Calu3 (cell line): ENCODE measurements at regions of chr10 and their contacts with region 1.

Region 1: DNA sequence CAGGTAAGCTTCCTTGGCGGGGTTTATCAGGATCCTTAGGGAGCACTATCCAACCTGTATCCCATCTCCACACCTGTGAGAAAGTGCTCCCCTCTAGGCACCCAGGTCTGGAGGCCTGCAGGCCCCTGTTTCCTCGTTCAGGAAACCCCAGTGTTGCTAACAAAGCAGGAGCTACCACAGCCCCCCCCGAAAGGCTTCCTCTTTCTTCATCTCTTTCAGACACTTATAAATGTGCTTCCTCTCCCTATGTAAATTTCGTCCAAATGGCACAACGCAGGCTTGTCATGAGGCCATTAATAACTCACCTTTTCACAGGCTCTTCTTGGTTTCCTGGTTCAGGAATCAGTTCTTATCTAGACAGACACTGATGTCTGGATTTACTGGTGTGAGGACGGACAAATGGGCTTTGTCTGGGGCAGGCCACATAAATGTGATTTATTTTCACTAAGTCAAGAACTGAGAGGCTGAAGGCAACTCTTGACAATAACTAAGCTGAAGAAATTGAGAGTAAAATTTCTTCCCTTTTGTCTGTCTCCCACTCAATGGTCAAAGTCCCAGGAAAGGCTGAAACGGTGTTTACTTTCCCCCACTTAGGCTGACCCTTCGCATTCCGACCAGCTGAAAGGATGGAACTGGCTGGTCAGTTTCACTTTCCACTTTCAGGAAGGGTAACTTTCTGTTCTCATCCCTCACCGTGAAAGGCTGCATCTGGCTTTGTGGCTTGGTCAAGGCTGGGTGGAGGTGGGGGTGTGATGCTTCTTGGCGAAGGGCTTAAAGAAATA is 46.8 kb downstream of the PIK3AP1 start:
- DNase-seq: peak; percentile 69
- H3K4me3 Mint-ChIP-seq: peak overlapping the region; percentile 74
- H3K27ac Mint-ChIP-seq: peak overlapping the region; percentile 98
- H3K4me1 Mint-ChIP-seq: peaks cover 44% of the 10 kb centered on the region
- H3K27me3 Mint-ChIP-seq: no peaks in the 10 kb centered on the region
- CTCF ChIP-seq: no peak

Region 2: GRCh38 chr10:96586419-96587263 is 86.9 kb before region 1 on chr10 and contains the start of gene TM9SF3:
- CTCF ChIA-PET with region 1: no interaction called
- intact Hi-C with region 1: loop called (anchors 5 kb)
- DNase-seq: peak; percentile 88
- H3K4me3 Mint-ChIP-seq: no peak within 1 kb of the TSS
- H3K27ac Mint-ChIP-seq: peak within 1 kb of the TSS; percentile 93
- H3K4me1 Mint-ChIP-seq: peaks cover 8% of the 10 kb centered on the region
- H3K27me3 Mint-ChIP-seq: no peaks in the 10 kb centered on the region
- CTCF ChIP-seq: no peak
- total RNA-seq, gene TM9SF3: 177 and 183 TPM in 2 replicates

Region 3: GRCh38 chr10:96626795-96627194 is 46.7 kb before region 1 on chr10:
- CTCF ChIA-PET with region 1: no interaction called
- intact Hi-C with region 1: no loop called
- DNase-seq: no peak
- H3K4me3 Mint-ChIP-seq: no peak overlapping the region
- H3K27ac Mint-ChIP-seq: no peak overlapping the region
- H3K4me1 Mint-ChIP-seq: no peaks in the 10 kb centered on the region
- H3K27me3 Mint-ChIP-seq: no peaks in the 10 kb centered on the region
- CTCF ChIP-seq: no peak

Region 4: GRCh38 chr10:96690755-96691731 is 17.5 kb after region 1 on chr10:
- CTCF ChIA-PET with region 1: interaction called, 3 read pairs
- intact Hi-C with region 1: loop called (anchors 1 kb)
- DNase-seq: no peak
- H3K4me3 Mint-ChIP-seq: no peak overlapping the region
- H3K27ac Mint-ChIP-seq: no peak overlapping the region
- H3K4me1 Mint-ChIP-seq: peaks cover 24% of the 10 kb centered on the region
- H3K27me3 Mint-ChIP-seq: no peaks in the 10 kb centered on the region
- CTCF ChIP-seq: no peak

Region 5: GRCh38 chr10:96719850-96720421 is 46.4 kb after region 1 on chr10:
- CTCF ChIA-PET with region 1: interaction called, 11 read pairs
- intact Hi-C with region 1: loop called (anchors 2 kb)
- DNase-seq: peak; percentile 86
- H3K4me3 Mint-ChIP-seq: peak overlapping the region; percentile 83
- H3K27ac Mint-ChIP-seq: peak overlapping the region; percentile 53
- H3K4me1 Mint-ChIP-seq: peaks cover 32% of the 10 kb centered on the region
- H3K27me3 Mint-ChIP-seq: no peaks in the 10 kb centered on the region
- CTCF ChIP-seq: peak; percentile 42

Region 6: GRCh38 chr10:97810446-97810845 is 1136.9 kb after region 1 on chr10:
- CTCF ChIA-PET with region 1: no interaction called
- intact Hi-C with region 1: no loop called
- DNase-seq: no peak
- H3K4me3 Mint-ChIP-seq: no peak overlapping the region
- H3K27ac Mint-ChIP-seq: no peak overlapping the region
- H3K4me1 Mint-ChIP-seq: no peaks in the 10 kb centered on the region
- H3K27me3 Mint-ChIP-seq: peaks cover 8% of the 10 kb centered on the region
- CTCF ChIP-seq: no peak